ENCODE measurements at regions of chr14 and their contacts with region 1.

Region 1: DNA sequence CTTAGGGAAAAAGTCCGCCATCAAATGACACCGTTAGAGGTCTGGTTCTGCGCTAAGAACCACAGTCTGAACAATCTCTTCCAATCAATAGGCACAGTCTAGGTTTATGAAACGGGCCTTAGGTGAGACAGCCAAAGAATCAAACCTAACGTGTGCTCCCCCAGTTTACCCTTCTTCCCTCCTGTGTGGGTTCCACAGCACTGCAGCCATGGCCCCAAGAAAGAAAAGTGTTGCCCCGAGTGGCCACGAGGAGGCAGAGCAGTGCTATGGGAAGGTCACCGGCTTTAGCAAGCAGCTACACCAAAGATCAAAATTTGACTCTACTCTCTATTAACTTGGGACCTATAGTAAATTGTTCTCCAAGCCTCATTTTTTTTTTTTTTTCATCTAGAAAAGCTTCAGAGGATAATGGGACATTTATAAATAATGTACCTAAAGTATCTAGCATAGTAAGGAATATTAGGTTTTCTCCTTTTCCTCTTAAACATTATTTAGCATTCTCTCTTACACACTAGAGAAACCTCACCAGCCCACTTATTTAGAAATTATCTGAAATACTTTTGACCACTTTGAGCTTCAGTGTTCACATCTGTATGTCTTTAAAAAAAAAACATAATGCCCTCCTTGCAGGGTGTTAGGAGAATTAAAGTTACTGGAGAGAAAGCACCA is 70.2 kb upstream of the GPHB5 start:
- DNase-seq: peak; percentile 76
- H3K4me3 Mint-ChIP-seq: no peak overlapping the region
- H3K27ac Mint-ChIP-seq: no peak overlapping the region
- H3K4me1 Mint-ChIP-seq: peaks cover under 1% of the 10 kb centered on the region
- H3K27me3 Mint-ChIP-seq: no peaks in the 10 kb centered on the region

Region 2: DNA sequence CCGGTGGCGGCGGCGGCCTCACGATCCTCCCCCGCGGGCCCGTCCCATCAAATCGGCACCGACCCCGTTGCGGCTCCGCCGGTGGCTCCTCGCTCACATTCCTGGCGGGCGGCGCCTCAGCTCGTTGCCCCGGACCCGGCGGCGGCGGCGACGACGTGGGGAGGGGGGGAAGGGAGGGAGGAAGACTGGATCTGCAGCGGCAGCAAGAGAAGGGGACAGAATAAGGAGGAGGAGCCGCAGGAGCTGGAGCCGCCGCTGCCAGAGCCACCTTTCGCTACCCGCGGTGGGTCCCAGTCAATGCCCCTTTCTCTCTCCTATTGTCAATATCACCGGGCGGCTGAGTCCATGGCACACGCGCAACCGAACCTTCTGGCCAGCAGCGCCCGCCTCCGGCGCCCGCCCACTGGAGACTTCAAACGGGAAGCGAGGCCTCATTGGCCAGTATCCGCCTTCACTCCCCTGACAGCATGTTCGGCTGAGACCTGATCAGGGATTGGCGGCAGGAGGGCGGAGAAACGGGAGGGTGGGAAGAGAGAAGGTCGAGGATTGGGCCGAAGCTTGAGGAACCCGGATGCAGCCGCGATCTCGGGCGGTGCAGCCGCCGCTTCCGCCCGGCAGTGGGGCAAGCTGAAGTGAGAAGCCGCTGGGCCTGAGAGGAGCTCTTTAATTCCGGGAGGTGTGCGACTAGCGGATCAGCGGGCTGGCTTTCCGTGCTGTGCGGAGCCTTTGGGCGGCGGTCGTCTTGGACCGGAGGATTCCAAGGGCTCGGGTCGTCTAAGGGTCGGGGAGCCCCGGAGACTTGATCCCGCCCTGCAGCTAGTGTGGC is 154.3 kb after region 1 on chr14 and contains the start of gene PPP2R5E:
- CTCF ChIA-PET with region 1: interaction called, 17 read pairs
- POLR2A ChIA-PET with region 1: no interaction called
- intact Hi-C with region 1: loop called (anchors 2 kb)
- DNase-seq: peak; percentile 99
- H3K4me3 Mint-ChIP-seq: peak within 1 kb of the TSS; percentile 82
- H3K27ac Mint-ChIP-seq: peak within 1 kb of the TSS; percentile 86
- H3K4me1 Mint-ChIP-seq: peaks cover 31% of the 10 kb centered on the region
- H3K27me3 Mint-ChIP-seq: no peaks in the 10 kb centered on the region
- total RNA-seq, gene PPP2R5E: 37.7 to 37.8 TPM